Naive thymus-derived CD4-positive, alpha-beta T cell (primary cell): ENCODE measurements at regions of chr1 and their contacts with region 1.

Region 1: GRCh38 chr1:167447521-167448136 is 70.7 kb downstream of the CD247 start:
- DNase-seq: peak; percentile 42 to 91 (median 83)
- ATAC-seq: peak; percentile 88
- H3K4me3 ChIP-seq: peak overlapping the region; percentile 38
- H3K4me3 Mint-ChIP-seq: peak overlapping the region; percentile 72 to 90 (median 82)
- H3K27ac ChIP-seq: peak overlapping the region; percentile 89
- H3K27ac Mint-ChIP-seq: peak overlapping the region; percentile 90 to 99 (median 97)
- H3K4me1 ChIP-seq: peaks cover 71 to 83% of the 10 kb centered on the region in 2 donors
- H3K4me1 Mint-ChIP-seq: peaks cover 56 to 97% (median 82%) of the 10 kb centered on the region in 7 donors
- H3K27me3 ChIP-seq: no peaks in the 10 kb centered on the region
- H3K27me3 Mint-ChIP-seq: no peaks in the 10 kb centered on the region

Region 2: GRCh38 chr1:167126811-167127210 is 320.8 kb before region 1 on chr1:
- CTCF ChIA-PET with region 1: no interaction called
- POLR2A ChIA-PET with region 1: no interaction called
- intact Hi-C with region 1: no loop called
- DNase-seq: no peak
- ATAC-seq: no peak
- H3K4me3 ChIP-seq: no peak overlapping the region
- H3K4me3 Mint-ChIP-seq: no peak overlapping the region
- H3K27ac ChIP-seq: no peak overlapping the region
- H3K27ac Mint-ChIP-seq: no peak overlapping the region
- H3K4me1 ChIP-seq: peaks cover 0 to 3% of the 10 kb centered on the region in 2 donors
- H3K4me1 Mint-ChIP-seq: peaks cover 0 to 2% (median 0%) of the 10 kb centered on the region in 7 donors
- H3K27me3 ChIP-seq: no peaks in the 10 kb centered on the region
- H3K27me3 Mint-ChIP-seq: peaks cover 12 to 33% (median 24%) of the 10 kb centered on the region in 5 donors

Region 3: GRCh38 chr1:167467126-167467710 is 19.6 kb after region 1 on chr1:
- CTCF ChIA-PET with region 1: interaction called, 3 read pairs
- POLR2A ChIA-PET with region 1: interaction called, 156 read pairs
- intact Hi-C with region 1: loop called in 1 of 2 experiments (anchors 1 kb)
- DNase-seq: no peak
- ATAC-seq: peak; percentile 57
- H3K4me3 ChIP-seq: no peak overlapping the region
- H3K4me3 Mint-ChIP-seq: peak overlapping the region in 8 of 10 donors; percentile 29 to 82 (median 59)
- H3K27ac ChIP-seq: peak overlapping the region; percentile 69
- H3K27ac Mint-ChIP-seq: peak overlapping the region in 8 of 9 donors; percentile 86 to 98 (median 92)
- H3K4me1 ChIP-seq: peaks cover under 1 to 79% of the 10 kb centered on the region in 2 donors
- H3K4me1 Mint-ChIP-seq: peaks cover 39 to 99% (median 92%) of the 10 kb centered on the region in 7 donors
- H3K27me3 ChIP-seq: no peaks in the 10 kb centered on the region
- H3K27me3 Mint-ChIP-seq: no peaks in the 10 kb centered on the region

Region 4: GRCh38 chr1:167486090-167486824 is 38.6 kb after region 1 on chr1:
- CTCF ChIA-PET with region 1: interaction called, 6 read pairs
- POLR2A ChIA-PET with region 1: interaction called, 184 read pairs
- intact Hi-C with region 1: loop called in 1 of 2 experiments (anchors 2 kb)
- DNase-seq: no peak
- ATAC-seq: no peak
- H3K4me3 ChIP-seq: peak overlapping the region; percentile 6
- H3K4me3 Mint-ChIP-seq: peak overlapping the region; percentile 74 to 88 (median 84)
- H3K27ac ChIP-seq: peak overlapping the region; percentile 83
- H3K27ac Mint-ChIP-seq: peak overlapping the region; percentile 84 to 99 (median 98)
- H3K4me1 ChIP-seq: peaks cover 65 to 93% of the 10 kb centered on the region in 2 donors
- H3K4me1 Mint-ChIP-seq: peaks cover 63 to 100% (median 97%) of the 10 kb centered on the region in 7 donors
- H3K27me3 ChIP-seq: no peaks in the 10 kb centered on the region
- H3K27me3 Mint-ChIP-seq: no peaks in the 10 kb centered on the region

Region 5: DNA sequence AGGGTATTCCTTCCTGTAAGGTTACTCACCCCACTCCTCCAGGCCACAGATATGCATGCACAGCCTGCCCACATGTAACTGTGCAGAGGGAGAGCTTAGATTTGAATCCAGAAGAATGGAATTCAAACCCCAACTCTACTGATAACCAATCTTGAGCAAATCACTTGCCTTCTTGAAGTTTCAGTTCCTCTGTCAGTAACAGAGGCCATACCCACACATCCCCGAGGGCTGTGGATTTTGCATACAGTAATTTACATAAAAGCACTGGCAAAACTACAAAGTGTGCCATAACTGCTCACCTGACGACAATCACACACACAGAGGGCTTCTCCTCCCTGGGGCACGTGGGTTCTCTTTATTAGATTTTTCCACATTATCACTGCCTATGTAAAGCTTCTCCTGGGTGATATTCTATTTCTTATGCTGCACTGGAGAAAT is 52.1 kb after region 1 on chr1:
- CTCF ChIA-PET with region 1: interaction called, 4 read pairs
- POLR2A ChIA-PET with region 1: interaction called, 27 read pairs
- intact Hi-C with region 1: no loop called
- DNase-seq: peak in 6 of 9 donors; percentile 51 to 74 (median 55)
- ATAC-seq: peak; percentile 76
- H3K4me3 ChIP-seq: peak overlapping the region; percentile 8
- H3K4me3 Mint-ChIP-seq: peak overlapping the region; percentile 49 to 88 (median 68)
- H3K27ac ChIP-seq: peak overlapping the region; percentile 96
- H3K27ac Mint-ChIP-seq: peak overlapping the region; percentile 77 to 100 (median 94)
- H3K4me1 ChIP-seq: peaks cover 55 to 99% of the 10 kb centered on the region in 2 donors
- H3K4me1 Mint-ChIP-seq: peaks cover 76 to 100% (median 98%) of the 10 kb centered on the region in 7 donors
- H3K27me3 ChIP-seq: no peaks in the 10 kb centered on the region
- H3K27me3 Mint-ChIP-seq: no peaks in the 10 kb centered on the region

Region 6: GRCh38 chr1:167533851-167534300 is 86.2 kb after region 1 on chr1:
- CTCF ChIA-PET with region 1: interaction called, 19 read pairs
- POLR2A ChIA-PET with region 1: interaction called, 5 read pairs
- intact Hi-C with region 1: loop called in 1 of 2 experiments (anchors 1 kb)
- DNase-seq: peak in 8 of 9 donors; percentile 50 to 72 (median 58)
- ATAC-seq: peak; percentile 87
- H3K4me3 ChIP-seq: no peak overlapping the region
- H3K4me3 Mint-ChIP-seq: no peak overlapping the region
- H3K27ac ChIP-seq: no peak overlapping the region
- H3K27ac Mint-ChIP-seq: peak overlapping the region in 1 of 9 donors; percentile 30
- H3K4me1 ChIP-seq: no peaks in the 10 kb centered on the region
- H3K4me1 Mint-ChIP-seq: peaks cover 0 to 11% (median 2%) of the 10 kb centered on the region in 7 donors
- H3K27me3 ChIP-seq: no peaks in the 10 kb centered on the region
- H3K27me3 Mint-ChIP-seq: peaks cover 0 to 3% (median 0%) of the 10 kb centered on the region in 5 donors